GM12878 (cell line): ENCODE measurements at regions of chr7 and their contacts with region 1.

Region 1: GRCh38 chr7:77651573-77652162 is 44.6 kb upstream of the RSBN1L start:
- DNase-seq: no peak
- ATAC-seq: peak; percentile 70
- H3K4me3 ChIP-seq: no peak overlapping the region
- H3K27ac ChIP-seq: no peak overlapping the region
- H3K4me1 ChIP-seq: no peaks in the 10 kb centered on the region
- H3K27me3 ChIP-seq: no peaks in the 10 kb centered on the region
- CTCF ChIP-seq: peak; percentile 59 to 61 (median 60)
- EP300 ChIP-seq: no peak
- POLR2A ChIP-seq: no peak
- RAD21 ChIP-seq: peak; percentile 76

Region 2: DNA sequence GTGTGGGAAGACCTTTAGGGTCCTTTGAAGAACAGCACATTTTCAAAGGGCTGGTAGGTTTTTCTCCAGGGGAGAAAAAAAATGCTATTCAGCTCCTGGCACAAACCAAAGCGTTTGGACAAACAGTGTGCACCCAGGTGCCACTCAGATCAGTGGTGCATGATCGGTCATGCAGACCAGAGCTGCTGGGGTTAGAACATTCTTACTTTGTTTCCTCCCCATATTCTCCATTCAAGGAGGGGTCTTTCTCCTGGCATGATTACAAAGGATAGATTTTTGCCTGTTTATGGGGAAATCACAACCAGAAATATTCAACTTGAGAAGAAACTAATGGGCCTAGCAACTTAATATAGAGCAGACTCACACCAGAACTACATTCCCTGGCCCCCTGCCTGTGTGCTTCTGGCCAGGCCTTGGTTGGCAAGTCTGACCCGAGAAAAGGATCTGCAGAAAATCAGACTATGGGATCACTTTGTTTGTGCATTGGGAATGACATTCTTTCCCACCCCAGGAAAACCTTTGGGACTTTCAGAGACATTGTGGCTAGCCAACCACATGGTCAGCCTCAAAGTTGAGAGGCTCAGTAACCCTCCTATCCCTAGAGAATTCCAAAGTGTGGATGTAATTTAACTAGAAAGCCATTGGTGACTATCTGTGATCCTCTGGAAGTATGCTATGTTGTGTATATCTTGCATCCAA is 369.7 kb before region 1 on chr7:
- CTCF ChIA-PET with region 1: no interaction called
- POLR2A ChIA-PET with region 1: no interaction called
- RAD21 ChIA-PET with region 1: no interaction called
- SMC1A ChIA-PET with region 1: no interaction called
- in situ Hi-C with region 1: no loop called
- intact Hi-C with region 1: no loop called
- DNase-seq: no peak
- ATAC-seq: no peak
- H3K4me3 ChIP-seq: no peak overlapping the region
- H3K27ac ChIP-seq: no peak overlapping the region
- H3K4me1 ChIP-seq: no peaks in the 10 kb centered on the region
- H3K27me3 ChIP-seq: no peaks in the 10 kb centered on the region
- CTCF ChIP-seq: no peak
- EP300 ChIP-seq: no peak
- POLR2A ChIP-seq: no peak
- RAD21 ChIP-seq: no peak

Region 3: GRCh38 chr7:77383333-77383740 is 268.3 kb before region 1 on chr7:
- CTCF ChIA-PET with region 1: no interaction called
- POLR2A ChIA-PET with region 1: no interaction called
- RAD21 ChIA-PET with region 1: no interaction called
- SMC1A ChIA-PET with region 1: no interaction called
- in situ Hi-C with region 1: no loop called
- intact Hi-C with region 1: no loop called
- DNase-seq: no peak
- ATAC-seq: no peak
- H3K4me3 ChIP-seq: no peak overlapping the region
- H3K27ac ChIP-seq: no peak overlapping the region
- H3K4me1 ChIP-seq: no peaks in the 10 kb centered on the region
- H3K27me3 ChIP-seq: no peaks in the 10 kb centered on the region
- CTCF ChIP-seq: no peak
- EP300 ChIP-seq: no peak
- POLR2A ChIP-seq: no peak
- RAD21 ChIP-seq: no peak

Region 4: DNA sequence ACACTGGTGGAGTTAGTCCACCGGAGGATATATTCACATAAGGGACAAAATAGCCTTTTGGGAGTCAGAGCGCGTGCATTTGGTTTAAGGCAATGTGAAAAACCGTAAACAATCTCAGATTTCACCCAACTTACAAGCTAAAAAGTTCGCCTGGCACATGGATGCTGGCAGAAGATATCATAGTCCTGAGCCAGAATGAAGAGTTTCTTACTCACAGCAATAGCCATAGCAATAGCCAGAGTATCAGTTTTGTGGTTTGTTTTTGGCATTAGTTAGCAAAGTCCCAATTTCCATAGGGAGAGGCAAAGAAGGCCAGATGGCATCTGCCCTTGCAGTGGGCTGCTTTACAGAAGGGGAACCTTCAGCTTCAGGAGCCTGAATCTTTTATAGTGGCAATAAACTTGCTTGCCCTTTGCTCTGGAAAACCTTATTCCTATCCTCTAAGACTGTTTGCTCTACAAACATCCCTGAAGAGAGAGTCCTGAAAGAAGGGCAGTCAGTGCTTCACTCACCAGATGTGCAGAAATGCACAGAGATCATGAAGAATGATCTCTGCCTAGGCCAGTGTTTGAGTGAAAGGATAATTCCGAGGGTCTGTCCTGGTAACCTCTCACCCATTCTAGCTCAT is 15.9 kb after region 1 on chr7:
- CTCF ChIA-PET with region 1: interaction called, 19 read pairs
- POLR2A ChIA-PET with region 1: no interaction called
- RAD21 ChIA-PET with region 1: interaction called, 3 read pairs
- SMC1A ChIA-PET with region 1: interaction called, 5 read pairs
- in situ Hi-C with region 1: no loop called
- intact Hi-C with region 1: no loop called
- DNase-seq: no peak
- ATAC-seq: no peak
- H3K4me3 ChIP-seq: no peak overlapping the region
- H3K27ac ChIP-seq: no peak overlapping the region
- H3K4me1 ChIP-seq: no peaks in the 10 kb centered on the region
- H3K27me3 ChIP-seq: no peaks in the 10 kb centered on the region
- CTCF ChIP-seq: no peak
- EP300 ChIP-seq: no peak
- POLR2A ChIP-seq: no peak
- RAD21 ChIP-seq: no peak

Region 5: GRCh38 chr7:77702513-77702912 is 50.8 kb after region 1 on chr7:
- CTCF ChIA-PET with region 1: interaction called, 29 read pairs
- POLR2A ChIA-PET with region 1: interaction called, 3 read pairs
- RAD21 ChIA-PET with region 1: interaction called, 4 read pairs
- SMC1A ChIA-PET with region 1: interaction called, 8 read pairs
- in situ Hi-C with region 1: no loop called
- intact Hi-C with region 1: no loop called
- DNase-seq: no peak
- ATAC-seq: no peak
- H3K4me3 ChIP-seq: no peak overlapping the region; the same call in 1 of the 2 replicates
- H3K27ac ChIP-seq: peak overlapping the region; percentile 18; the same call in 1 of the 2 replicates
- H3K4me1 ChIP-seq: peaks cover 6% of the 10 kb centered on the region
- H3K27me3 ChIP-seq: no peaks in the 10 kb centered on the region
- CTCF ChIP-seq: no peak
- EP300 ChIP-seq: no peak
- POLR2A ChIP-seq: no peak
- RAD21 ChIP-seq: no peak

Region 6: DNA sequence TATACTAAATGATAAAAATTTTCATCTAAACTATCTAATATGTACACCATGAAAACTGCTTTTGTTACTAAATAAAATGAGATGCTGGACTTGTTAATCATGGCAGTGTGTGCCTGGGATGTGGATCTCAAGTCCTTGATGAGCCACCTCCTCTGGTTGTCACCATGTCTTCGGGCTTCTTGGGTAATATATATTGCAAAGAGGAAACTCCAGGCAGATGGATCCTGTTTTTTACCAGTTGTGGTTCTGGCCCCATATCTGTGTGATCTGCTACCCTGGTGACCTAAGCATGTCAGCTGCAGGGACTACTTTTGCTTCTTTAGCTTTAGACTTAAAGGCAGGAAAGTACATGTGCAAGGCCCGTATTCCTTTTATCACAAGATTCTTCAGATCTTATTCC is 100.4 kb after region 1 on chr7:
- CTCF ChIA-PET with region 1: interaction called, 218 read pairs
- POLR2A ChIA-PET with region 1: no interaction called
- RAD21 ChIA-PET with region 1: interaction called, 32 read pairs
- SMC1A ChIA-PET with region 1: interaction called, 56 read pairs
- in situ Hi-C with region 1: loop called (anchors 5 kb)
- intact Hi-C with region 1: no loop called
- DNase-seq: no peak
- ATAC-seq: no peak
- H3K4me3 ChIP-seq: no peak overlapping the region
- H3K27ac ChIP-seq: no peak overlapping the region
- H3K4me1 ChIP-seq: no peaks in the 10 kb centered on the region
- H3K27me3 ChIP-seq: no peaks in the 10 kb centered on the region
- CTCF ChIP-seq: no peak
- EP300 ChIP-seq: no peak
- POLR2A ChIP-seq: no peak
- RAD21 ChIP-seq: no peak

Region 7: GRCh38 chr7:77765906-77766800 is 114.5 kb after region 1 on chr7:
- CTCF ChIA-PET with region 1: interaction called, 225 read pairs
- POLR2A ChIA-PET with region 1: no interaction called
- RAD21 ChIA-PET with region 1: interaction called, 58 read pairs
- SMC1A ChIA-PET with region 1: interaction called, 75 read pairs
- in situ Hi-C with region 1: no loop called
- intact Hi-C with region 1: no loop called
- DNase-seq: no peak
- ATAC-seq: no peak
- H3K4me3 ChIP-seq: no peak overlapping the region
- H3K27ac ChIP-seq: no peak overlapping the region
- H3K4me1 ChIP-seq: no peaks in the 10 kb centered on the region
- H3K27me3 ChIP-seq: no peaks in the 10 kb centered on the region
- CTCF ChIP-seq: no peak
- EP300 ChIP-seq: no peak
- POLR2A ChIP-seq: no peak
- RAD21 ChIP-seq: no peak

Region 8: DNA sequence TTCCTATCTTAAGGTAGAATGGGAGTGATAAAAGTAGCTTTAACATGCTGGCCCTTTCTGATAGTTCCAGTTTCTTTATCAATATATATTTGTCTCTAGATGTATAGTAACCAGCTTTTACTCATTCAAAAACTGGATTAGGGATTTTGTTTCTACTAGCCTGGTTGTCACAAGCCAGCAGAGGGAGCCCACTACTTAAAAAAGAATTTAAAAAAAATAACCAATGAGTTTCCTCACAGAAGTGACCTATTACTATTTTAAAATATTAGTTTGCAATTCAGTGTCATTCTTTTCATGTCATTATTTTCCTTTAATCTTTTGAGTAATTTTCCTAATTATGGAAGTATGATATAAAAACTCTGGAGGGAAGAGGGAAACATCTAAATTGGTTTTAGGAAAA is 289.0 kb after region 1 on chr7:
- CTCF ChIA-PET with region 1: interaction called, 22 read pairs
- POLR2A ChIA-PET with region 1: no interaction called
- RAD21 ChIA-PET with region 1: interaction called, 9 read pairs
- SMC1A ChIA-PET with region 1: interaction called, 17 read pairs
- in situ Hi-C with region 1: loop called (anchors 10 kb)
- intact Hi-C with region 1: loop called (anchors 5 kb)
- DNase-seq: no peak
- ATAC-seq: peak; percentile 75
- H3K4me3 ChIP-seq: no peak overlapping the region
- H3K27ac ChIP-seq: no peak overlapping the region
- H3K4me1 ChIP-seq: no peaks in the 10 kb centered on the region
- H3K27me3 ChIP-seq: no peaks in the 10 kb centered on the region
- CTCF ChIP-seq: peak; percentile 44 to 66 (median 53); a peak in 5 of 6 replicates
- EP300 ChIP-seq: no peak
- POLR2A ChIP-seq: no peak
- RAD21 ChIP-seq: peak; percentile 73